ENCODE measurements at regions of chr1 and their contacts with region 1.

Region 1: DNA sequence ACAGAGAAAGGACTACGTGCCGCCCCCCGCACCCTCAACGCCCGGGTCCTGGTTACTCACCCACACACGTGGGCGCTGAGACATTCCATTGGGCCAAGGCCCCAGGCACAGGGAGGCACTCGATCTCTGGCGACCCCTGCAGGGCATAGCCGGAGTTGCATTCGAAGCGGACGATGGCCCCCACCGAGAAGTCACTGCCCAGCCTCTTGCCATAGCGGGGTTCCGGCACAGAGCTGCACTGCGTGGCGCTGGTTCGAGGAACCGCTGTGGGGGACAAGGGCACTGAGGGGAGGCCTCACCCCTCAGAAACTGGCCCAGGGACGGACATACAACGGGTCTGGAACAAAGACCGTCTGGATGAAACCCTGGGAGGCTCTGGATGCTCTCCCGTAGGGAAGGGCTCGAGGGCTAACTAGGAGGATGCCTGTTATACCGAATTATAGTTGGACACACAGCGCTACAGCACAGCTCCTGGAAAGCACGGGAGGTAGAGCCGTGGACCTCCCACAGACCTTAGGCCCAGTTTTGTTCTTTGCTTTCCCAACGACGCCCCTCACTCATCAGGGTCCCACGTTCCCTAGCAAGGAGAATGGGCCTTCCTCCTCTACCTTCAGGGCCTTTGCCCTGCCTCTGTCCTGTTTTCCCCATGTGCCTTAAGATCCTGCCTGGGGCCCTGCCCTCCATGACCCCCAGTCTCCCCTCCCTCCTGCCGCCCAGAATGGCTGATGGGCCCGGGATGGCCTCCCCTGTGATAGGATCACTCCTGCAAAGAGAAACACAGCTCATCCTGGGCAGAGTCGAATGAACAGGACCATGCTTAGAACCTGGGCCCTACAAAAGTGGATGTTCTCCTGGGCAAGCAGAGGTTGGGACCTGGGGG is 152.8 kb downstream of the ZSCAN20 start:
- DNase-seq: peak; percentile 75 to 91 (median 89)
- ATAC-seq: peak; percentile 99
- H3K4me3 ChIP-seq: no peak overlapping the region
- H3K27ac ChIP-seq: no peak overlapping the region
- H3K4me1 ChIP-seq: peaks cover 0 to 10% of the 10 kb centered on the region in 2 experiments; a peak in 1 of 5 replicates
- H3K27me3 ChIP-seq: peaks cover 4 to 35% of the 10 kb centered on the region in 2 experiments; a peak in 2 of 5 replicates
- CTCF ChIP-seq: peak; percentile 86 to 94 (median 86)
- EP300 ChIP-seq: no peak
- POLR2A ChIP-seq: no peak
- RAD21 ChIP-seq: peak in 1 of 2 experiments; percentile 59; a peak in 2 of 4 replicates

Region 2: GRCh38 chr1:32876341-32877210 is 748.7 kb before region 1 on chr1:
- CTCF ChIA-PET with region 1: no interaction called
- POLR2A ChIA-PET with region 1: no interaction called
- in situ Hi-C with region 1: loop called (anchors 25 kb)
- intact Hi-C with region 1: no loop called
- DNase-seq: peak; percentile 72 to 89 (median 86)
- ATAC-seq: peak; percentile 85
- H3K4me3 ChIP-seq: no peak overlapping the region
- H3K27ac ChIP-seq: no peak overlapping the region
- H3K4me1 ChIP-seq: peaks cover 2 to 6% of the 10 kb centered on the region in 2 experiments; a peak in 3 of 5 replicates
- H3K27me3 ChIP-seq: peaks cover 15 to 39% of the 10 kb centered on the region in 2 experiments; a peak in 4 of 5 replicates
- CTCF ChIP-seq: peak; percentile 86 to 99 (median 90)
- EP300 ChIP-seq: no peak
- POLR2A ChIP-seq: no peak
- RAD21 ChIP-seq: peak; percentile 65 to 85